ENCODE measurements at regions of chr7 and their contacts with region 1.

Region 1: DNA sequence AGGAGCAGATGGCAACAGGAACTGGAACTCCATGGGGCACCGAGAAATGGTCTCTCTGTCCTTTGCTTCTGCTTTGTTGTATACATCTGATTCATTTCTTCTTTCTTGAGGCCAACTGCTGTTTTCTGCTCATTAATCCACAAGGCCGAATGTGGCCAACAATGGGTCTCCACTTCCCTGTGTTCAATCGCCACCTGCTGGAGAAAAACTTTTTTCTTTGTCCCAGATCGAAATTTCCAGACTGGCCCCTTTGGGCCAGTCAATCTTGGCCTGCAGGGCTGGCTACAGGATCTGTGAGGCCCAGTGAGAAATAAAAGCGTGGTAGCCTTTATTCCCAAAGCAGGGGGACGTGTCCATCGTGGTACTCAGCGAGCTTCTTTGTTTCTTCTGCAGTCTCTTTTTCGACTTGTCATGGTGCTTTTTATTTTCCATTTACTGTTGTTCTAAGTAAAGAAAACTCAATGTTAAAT is 58.8 kb downstream of the PARP12 start:
- DNase-seq: no peak
- H3K4me3 ChIP-seq: no peak overlapping the region
- H3K27ac ChIP-seq: no peak overlapping the region
- H3K4me1 ChIP-seq: no peaks in the 10 kb centered on the region
- H3K27me3 ChIP-seq: no peaks in the 10 kb centered on the region
- CTCF ChIP-seq: peak in 2 of 3 experiments; percentile 14 to 34
- POLR2A ChIP-seq: no peak

Region 2: DNA sequence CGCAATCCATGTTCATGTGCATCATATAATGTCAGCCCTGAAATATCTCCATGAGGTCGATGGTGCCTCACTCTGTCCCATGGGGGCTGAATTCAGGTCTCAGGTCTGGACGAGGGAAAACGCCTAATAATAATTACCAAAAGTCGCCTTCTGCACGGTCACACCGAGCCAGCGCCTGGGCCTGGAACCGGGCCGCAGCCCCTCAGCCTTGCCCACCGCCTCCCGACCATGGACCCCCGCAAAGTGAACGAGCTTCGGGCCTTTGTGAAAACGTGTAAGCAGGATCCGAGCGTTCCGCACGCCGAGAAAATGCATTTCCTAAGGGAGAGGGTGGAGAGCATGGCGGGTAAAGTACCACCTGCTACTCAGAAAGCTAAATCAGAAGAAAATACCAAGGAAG is 501.7 kb before region 1 on chr7:
- intact Hi-C with region 1: loop called (anchors 5 kb)
- DNase-seq: no peak
- H3K4me3 ChIP-seq: no peak overlapping the region
- H3K27ac ChIP-seq: no peak overlapping the region
- H3K4me1 ChIP-seq: peaks cover 9% of the 10 kb centered on the region
- H3K27me3 ChIP-seq: no peaks in the 10 kb centered on the region
- CTCF ChIP-seq: no peak
- POLR2A ChIP-seq: no peak

Region 3: GRCh38 chr7:139635526-139636302 is 368.2 kb before region 1 on chr7:
- intact Hi-C with region 1: loop called (anchors 5 kb)
- DNase-seq: no peak
- H3K4me3 ChIP-seq: no peak overlapping the region
- H3K27ac ChIP-seq: no peak overlapping the region
- H3K4me1 ChIP-seq: no peaks in the 10 kb centered on the region
- H3K27me3 ChIP-seq: no peaks in the 10 kb centered on the region
- CTCF ChIP-seq: no peak
- POLR2A ChIP-seq: no peak

Measured in vagina (tissue), 2 donors.